ENCODE measurements at regions of chr18 and their contacts with region 1.

Region 1: DNA sequence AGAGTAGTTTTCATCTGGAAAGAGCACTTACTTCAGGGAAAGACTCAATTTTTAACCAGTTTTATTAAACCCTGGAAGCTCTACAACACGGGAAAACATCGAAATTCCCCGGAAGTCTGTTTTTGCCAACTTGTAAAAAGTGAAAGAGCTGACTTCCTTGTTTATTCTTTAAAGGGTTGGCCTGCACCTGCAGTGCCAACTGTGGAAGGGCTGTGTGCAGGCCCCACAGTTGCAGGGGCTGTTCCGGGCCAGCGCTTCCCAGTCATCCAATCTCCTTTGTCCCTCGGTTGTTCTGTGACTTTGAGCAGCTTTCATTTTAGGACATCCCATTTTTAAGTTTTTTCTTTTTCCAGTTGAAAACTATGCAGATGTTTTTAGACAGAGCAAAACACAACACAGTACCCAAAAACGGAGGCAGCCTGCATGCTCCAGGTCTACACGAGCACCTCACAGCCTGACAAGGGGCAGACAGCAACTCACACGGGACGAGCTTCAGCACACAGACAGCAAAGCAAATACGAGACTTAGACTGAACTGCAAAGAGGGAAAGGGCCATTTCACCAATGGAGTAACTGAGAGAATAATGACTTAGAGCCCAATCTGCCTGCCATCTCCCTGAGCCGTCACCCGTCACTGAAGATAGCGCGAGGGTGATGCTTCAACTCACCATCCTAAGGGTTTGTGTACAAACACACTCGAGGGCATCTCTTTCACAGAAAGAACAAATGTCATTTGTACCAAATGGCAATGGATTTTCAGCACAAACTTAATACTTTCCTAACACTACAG is 70.6 kb downstream of the EMILIN2 start:
- DNase-seq: no peak
- H3K4me3 ChIP-seq: no peak overlapping the region
- H3K27ac ChIP-seq: no peak overlapping the region
- H3K4me1 ChIP-seq: peaks cover 5% of the 10 kb centered on the region
- H3K27me3 ChIP-seq: no peaks in the 10 kb centered on the region
- CTCF ChIP-seq: no peak

Region 2: DNA sequence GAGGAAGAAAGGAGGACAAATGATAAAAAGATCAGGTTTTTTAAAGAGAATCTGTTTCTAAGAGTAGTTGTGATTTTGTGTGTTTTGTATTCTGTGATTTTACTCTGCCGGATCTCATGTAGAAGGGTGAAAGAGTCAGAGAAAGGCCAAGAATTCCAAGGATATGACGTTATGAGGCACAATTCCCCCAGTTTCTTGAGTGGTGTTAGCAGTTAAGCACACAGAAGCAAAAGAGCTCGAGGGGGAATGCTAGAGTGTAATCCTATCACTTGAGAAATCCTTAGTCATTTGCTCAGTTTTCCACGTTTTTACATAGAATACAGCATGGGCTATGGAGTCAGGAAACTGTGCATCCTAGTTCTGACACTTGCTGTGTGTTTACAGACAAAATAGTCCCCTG is 381.0 kb before region 1 on chr18:
- CTCF ChIA-PET with region 1: no interaction called
- POLR2A ChIA-PET with region 1: no interaction called
- intact Hi-C with region 1: no loop called
- DNase-seq: no peak
- H3K4me3 ChIP-seq: no peak overlapping the region
- H3K27ac ChIP-seq: no peak overlapping the region
- H3K4me1 ChIP-seq: peaks cover 5% of the 10 kb centered on the region
- H3K27me3 ChIP-seq: no peaks in the 10 kb centered on the region
- CTCF ChIP-seq: no peak

Region 3: GRCh38 chr18:2898186-2898640 is 19.2 kb before region 1 on chr18:
- CTCF ChIA-PET with region 1: no interaction called
- POLR2A ChIA-PET with region 1: no interaction called
- intact Hi-C with region 1: no loop called
- DNase-seq: no peak
- H3K4me3 ChIP-seq: no peak overlapping the region
- H3K27ac ChIP-seq: peak overlapping the region; percentile 25
- H3K4me1 ChIP-seq: peaks cover 7% of the 10 kb centered on the region
- H3K27me3 ChIP-seq: no peaks in the 10 kb centered on the region
- CTCF ChIP-seq: no peak

Region 4: DNA sequence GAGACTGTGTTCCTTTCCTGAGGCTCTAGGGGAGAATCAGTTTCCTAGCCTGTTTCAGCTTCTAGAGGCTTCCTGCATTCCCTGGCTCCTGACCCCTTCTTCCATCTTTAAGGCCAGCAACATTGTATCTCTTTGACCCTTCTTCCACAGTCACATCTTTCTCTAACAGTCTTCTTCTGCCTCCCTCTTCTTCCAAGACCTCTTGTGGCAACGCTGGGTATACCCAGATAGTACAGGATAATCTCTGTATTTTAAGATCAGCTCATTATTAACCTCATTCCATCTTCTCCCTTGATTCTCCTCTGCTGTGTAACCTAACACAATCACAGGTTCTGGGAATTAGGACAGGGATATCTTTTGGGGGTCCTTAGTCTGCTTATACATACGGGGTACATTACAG is 321.3 kb after region 1 on chr18:
- CTCF ChIA-PET with region 1: no interaction called
- POLR2A ChIA-PET with region 1: interaction called, 17 read pairs
- intact Hi-C with region 1: no loop called
- DNase-seq: no peak
- H3K4me3 ChIP-seq: no peak overlapping the region
- H3K27ac ChIP-seq: no peak overlapping the region
- H3K4me1 ChIP-seq: peaks cover 5% of the 10 kb centered on the region
- H3K27me3 ChIP-seq: no peaks in the 10 kb centered on the region
- CTCF ChIP-seq: peak; percentile 33; the same call in 1 of the 2 replicates